ENCODE measurements at regions of chrX and their contacts with region 1.

Region 1: DNA sequence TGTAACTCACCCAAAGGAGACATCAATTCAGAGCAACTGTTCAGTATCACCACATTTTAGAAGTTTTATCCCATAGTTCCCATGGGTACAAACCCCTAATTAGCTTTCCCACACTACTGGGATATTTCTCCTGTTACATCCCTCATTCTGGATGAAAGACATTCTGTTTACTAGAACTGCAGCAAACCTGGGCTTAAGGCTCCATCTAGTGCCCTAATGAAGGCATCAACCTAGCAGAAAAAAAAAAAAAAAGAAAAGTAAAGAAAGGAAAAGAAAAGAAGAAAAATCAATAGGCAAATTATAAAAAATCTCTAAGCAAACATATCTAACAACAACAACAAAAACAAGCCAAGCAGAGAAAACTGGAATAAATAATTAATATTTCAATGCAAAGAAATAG is 133.7 kb upstream of the CPXCR1 start:
- DNase-seq: peak in 1 of 2 experiments; percentile 36
- H3K4me3 ChIP-seq: no peak overlapping the region
- H3K4me3 Mint-ChIP-seq: peak overlapping the region; percentile 71
- H3K27ac Mint-ChIP-seq: peak overlapping the region; percentile 79
- H3K4me1 ChIP-seq: no peaks in the 10 kb centered on the region
- H3K4me1 Mint-ChIP-seq: no peaks in the 10 kb centered on the region
- H3K27me3 ChIP-seq: no peaks in the 10 kb centered on the region
- H3K27me3 Mint-ChIP-seq: no peaks in the 10 kb centered on the region
- CTCF ChIP-seq: peak; percentile 43 to 67

Region 2: DNA sequence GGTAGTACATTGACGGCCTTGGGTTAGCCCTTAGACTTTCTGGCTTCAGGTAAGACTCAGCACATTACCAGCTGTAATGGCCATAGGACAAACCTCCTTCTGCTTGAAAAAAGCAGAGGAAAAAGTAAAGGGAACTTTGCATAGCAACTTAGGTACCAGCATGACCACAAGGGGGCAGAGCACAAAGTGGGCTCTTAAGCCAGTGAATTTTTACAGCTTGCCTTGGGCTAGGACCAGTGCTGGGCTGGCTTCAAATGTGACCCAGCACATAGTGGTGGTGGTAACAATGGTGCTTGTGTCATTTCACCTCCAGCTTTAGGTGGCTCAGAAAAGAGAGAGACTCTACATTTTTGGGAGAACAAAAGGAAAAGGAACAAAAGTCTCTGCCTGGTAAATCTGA is 1029.7 kb before region 1 on chrX:
- CTCF ChIA-PET with region 1: no interaction called
- POLR2A ChIA-PET with region 1: no interaction called
- intact Hi-C with region 1: loop called (anchors 10 kb)
- DNase-seq: peak in 1 of 2 experiments; percentile 10
- H3K4me3 ChIP-seq: no peak overlapping the region
- H3K4me3 Mint-ChIP-seq: no peak overlapping the region
- H3K27ac Mint-ChIP-seq: no peak overlapping the region
- H3K4me1 ChIP-seq: no peaks in the 10 kb centered on the region
- H3K4me1 Mint-ChIP-seq: no peaks in the 10 kb centered on the region
- H3K27me3 ChIP-seq: no peaks in the 10 kb centered on the region
- H3K27me3 Mint-ChIP-seq: no peaks in the 10 kb centered on the region
- CTCF ChIP-seq: peak; percentile 26 to 35

Region 3: GRCh38 chrX:87975365-87975764 is 638.0 kb before region 1 on chrX:
- CTCF ChIA-PET with region 1: no interaction called
- POLR2A ChIA-PET with region 1: no interaction called
- intact Hi-C with region 1: loop called (anchors 1 kb)
- DNase-seq: no peak
- H3K4me3 ChIP-seq: no peak overlapping the region
- H3K4me3 Mint-ChIP-seq: no peak overlapping the region
- H3K27ac Mint-ChIP-seq: no peak overlapping the region
- H3K4me1 ChIP-seq: peaks cover 12% of the 10 kb centered on the region; the same call in 1 of the 2 replicates
- H3K4me1 Mint-ChIP-seq: peaks cover 5% of the 10 kb centered on the region
- H3K27me3 ChIP-seq: no peaks in the 10 kb centered on the region
- H3K27me3 Mint-ChIP-seq: no peaks in the 10 kb centered on the region
- CTCF ChIP-seq: no peak

Region 4: GRCh38 chrX:88135735-88136134 is 477.6 kb before region 1 on chrX:
- CTCF ChIA-PET with region 1: no interaction called
- POLR2A ChIA-PET with region 1: no interaction called
- intact Hi-C with region 1: loop called (anchors 1 kb)
- DNase-seq: peak in 1 of 2 experiments; percentile 1
- H3K4me3 ChIP-seq: no peak overlapping the region
- H3K4me3 Mint-ChIP-seq: no peak overlapping the region
- H3K27ac Mint-ChIP-seq: no peak overlapping the region
- H3K4me1 ChIP-seq: no peaks in the 10 kb centered on the region
- H3K4me1 Mint-ChIP-seq: no peaks in the 10 kb centered on the region
- H3K27me3 ChIP-seq: no peaks in the 10 kb centered on the region
- H3K27me3 Mint-ChIP-seq: no peaks in the 10 kb centered on the region
- CTCF ChIP-seq: peak in 1 of 2 experiments; percentile 15

Region 5: DNA sequence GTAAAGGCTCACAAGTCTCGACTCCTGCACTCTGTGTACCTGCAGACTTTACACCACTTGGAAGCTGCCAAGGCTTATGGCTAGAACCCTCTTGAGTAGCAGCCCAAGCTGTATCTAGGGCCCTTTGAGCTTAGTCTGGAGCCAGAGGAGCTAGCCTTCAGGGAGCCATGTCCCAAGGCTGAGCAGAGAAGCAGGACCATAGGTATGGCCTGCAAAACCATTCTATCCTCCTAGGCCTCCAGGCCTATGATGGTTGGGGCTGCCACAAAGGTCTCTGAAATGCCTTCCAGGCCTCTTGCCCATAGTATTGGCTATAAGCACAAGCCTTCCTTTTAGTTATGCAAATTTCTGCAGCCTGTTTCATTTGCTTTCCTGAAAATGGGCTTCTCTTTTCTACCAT is 247.0 kb before region 1 on chrX:
- CTCF ChIA-PET with region 1: no interaction called
- POLR2A ChIA-PET with region 1: no interaction called
- intact Hi-C with region 1: loop called (anchors 1 kb)
- DNase-seq: no peak
- H3K4me3 ChIP-seq: no peak overlapping the region
- H3K4me3 Mint-ChIP-seq: no peak overlapping the region
- H3K27ac Mint-ChIP-seq: no peak overlapping the region
- H3K4me1 ChIP-seq: no peaks in the 10 kb centered on the region
- H3K4me1 Mint-ChIP-seq: no peaks in the 10 kb centered on the region
- H3K27me3 ChIP-seq: no peaks in the 10 kb centered on the region
- H3K27me3 Mint-ChIP-seq: no peaks in the 10 kb centered on the region
- CTCF ChIP-seq: no peak

Region 6: GRCh38 chrX:88378406-88378805 is 234.9 kb before region 1 on chrX:
- CTCF ChIA-PET with region 1: no interaction called
- POLR2A ChIA-PET with region 1: no interaction called
- intact Hi-C with region 1: no loop called
- DNase-seq: no peak
- H3K4me3 ChIP-seq: no peak overlapping the region
- H3K4me3 Mint-ChIP-seq: no peak overlapping the region
- H3K27ac Mint-ChIP-seq: no peak overlapping the region
- H3K4me1 ChIP-seq: no peaks in the 10 kb centered on the region
- H3K4me1 Mint-ChIP-seq: no peaks in the 10 kb centered on the region
- H3K27me3 ChIP-seq: no peaks in the 10 kb centered on the region
- H3K27me3 Mint-ChIP-seq: no peaks in the 10 kb centered on the region
- CTCF ChIP-seq: no peak

Region 7: DNA sequence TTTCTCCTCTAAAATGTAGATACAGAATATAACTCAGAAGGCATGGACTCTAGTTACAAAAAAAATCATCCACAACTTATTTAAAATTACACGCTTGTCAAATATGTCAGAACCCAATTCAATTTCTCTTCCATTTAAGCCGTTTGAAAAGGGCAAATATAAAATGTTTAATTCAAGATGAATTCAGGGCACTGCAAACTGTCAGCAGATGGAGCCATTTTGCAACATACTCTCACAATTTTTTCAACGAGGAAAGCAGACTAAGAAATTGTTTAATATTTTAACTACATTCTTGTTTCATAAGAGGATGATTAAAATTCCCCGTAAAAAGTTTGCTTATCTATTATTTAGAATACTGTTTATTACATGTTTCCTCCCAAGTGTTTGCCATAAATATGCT is 187.6 kb before region 1 on chrX:
- CTCF ChIA-PET with region 1: interaction called, 3 read pairs
- POLR2A ChIA-PET with region 1: no interaction called
- intact Hi-C with region 1: loop called (anchors 1 kb)
- DNase-seq: peak in 1 of 2 experiments; percentile 9
- H3K4me3 ChIP-seq: no peak overlapping the region
- H3K4me3 Mint-ChIP-seq: no peak overlapping the region
- H3K27ac Mint-ChIP-seq: no peak overlapping the region
- H3K4me1 ChIP-seq: no peaks in the 10 kb centered on the region
- H3K4me1 Mint-ChIP-seq: no peaks in the 10 kb centered on the region
- H3K27me3 ChIP-seq: no peaks in the 10 kb centered on the region
- H3K27me3 Mint-ChIP-seq: no peaks in the 10 kb centered on the region
- CTCF ChIP-seq: peak in 1 of 2 experiments; percentile 28

Region 8: GRCh38 chrX:88443266-88443665 is 170.1 kb before region 1 on chrX:
- CTCF ChIA-PET with region 1: no interaction called
- POLR2A ChIA-PET with region 1: no interaction called
- intact Hi-C with region 1: no loop called
- DNase-seq: peak in 1 of 2 experiments; percentile 7
- H3K4me3 ChIP-seq: no peak overlapping the region
- H3K4me3 Mint-ChIP-seq: no peak overlapping the region
- H3K27ac Mint-ChIP-seq: peak overlapping the region; percentile 68
- H3K4me1 ChIP-seq: peaks cover 5% of the 10 kb centered on the region; the same call in 1 of the 2 replicates
- H3K4me1 Mint-ChIP-seq: peaks cover 15% of the 10 kb centered on the region
- H3K27me3 ChIP-seq: no peaks in the 10 kb centered on the region
- H3K27me3 Mint-ChIP-seq: no peaks in the 10 kb centered on the region
- CTCF ChIP-seq: no peak

Region 9: DNA sequence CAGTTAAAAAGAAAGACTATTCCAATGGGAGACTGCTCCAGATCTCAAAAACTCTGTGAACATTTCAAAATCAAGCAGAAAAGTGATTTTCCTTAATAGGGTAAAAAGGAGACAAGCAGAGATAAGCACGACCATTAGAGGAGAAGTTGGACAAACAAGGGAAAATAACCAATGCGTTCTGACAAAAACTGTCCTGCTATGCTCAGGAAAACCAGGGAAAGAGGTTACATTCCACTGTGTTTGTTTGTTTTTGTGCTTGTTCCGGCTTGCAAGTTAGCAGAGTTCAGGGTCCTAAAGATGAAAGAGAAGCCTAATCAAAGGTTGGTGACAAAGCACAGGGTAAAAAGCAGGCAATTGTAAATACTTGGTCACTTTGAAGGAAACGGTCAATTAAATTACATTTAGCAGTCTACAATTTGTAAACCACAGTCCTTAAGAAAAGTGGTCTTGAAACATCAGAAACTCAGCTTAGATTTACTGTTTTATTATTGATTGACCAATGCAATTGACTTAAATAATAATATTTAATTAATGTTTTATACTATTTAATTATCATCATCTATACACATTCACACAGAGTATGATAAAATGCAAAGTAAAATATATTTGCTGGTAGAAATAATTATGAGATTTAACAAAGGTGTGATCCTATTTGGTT is 52.5 kb before region 1 on chrX:
- CTCF ChIA-PET with region 1: no interaction called
- POLR2A ChIA-PET with region 1: no interaction called
- intact Hi-C with region 1: loop called (anchors 2 kb)
- DNase-seq: peak; percentile 49 to 56
- H3K4me3 ChIP-seq: no peak overlapping the region
- H3K4me3 Mint-ChIP-seq: peak overlapping the region; percentile 61
- H3K27ac Mint-ChIP-seq: peak overlapping the region; percentile 83
- H3K4me1 ChIP-seq: peaks cover 16% of the 10 kb centered on the region
- H3K4me1 Mint-ChIP-seq: peaks cover 5% of the 10 kb centered on the region
- H3K27me3 ChIP-seq: no peaks in the 10 kb centered on the region
- H3K27me3 Mint-ChIP-seq: no peaks in the 10 kb centered on the region
- CTCF ChIP-seq: no peak